T-cell (primary cell): ENCODE measurements at regions of chr11 and their contacts with region 1.

Region 1: DNA sequence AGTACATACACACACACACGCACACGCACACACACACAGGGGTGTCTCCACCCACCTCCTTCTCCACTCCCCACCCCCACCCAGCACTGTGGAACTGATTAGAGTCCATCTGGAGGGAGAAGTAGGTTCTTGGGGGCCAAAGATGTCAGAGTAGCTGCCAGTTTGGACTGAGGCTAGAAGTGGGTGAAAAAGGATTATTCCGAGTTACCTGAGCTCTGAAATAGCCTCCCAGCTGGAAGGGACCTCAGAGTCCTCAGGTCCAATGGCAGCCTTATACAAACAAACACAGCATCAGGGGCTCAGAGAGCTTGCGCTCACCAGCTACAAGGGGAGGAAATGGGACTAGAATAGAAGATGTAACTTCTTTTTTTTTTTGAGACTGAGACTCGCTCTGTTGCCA is 20.8 kb downstream of the IL10RA start:
- DNase-seq: peak in 1 of 35 experiments; percentile 35
- ATAC-seq: peak in 1 of 4 experiments; percentile 43
- H3K4me3 ChIP-seq: no peak overlapping the region
- H3K4me3 Mint-ChIP-seq: peak overlapping the region; percentile 65 to 85 (median 69)
- H3K27ac ChIP-seq: peak overlapping the region; percentile 88
- H3K27ac Mint-ChIP-seq: peak overlapping the region; percentile 99 to 100
- H3K4me1 ChIP-seq: peaks cover 45 to 99% of the 10 kb centered on the region in 2 experiments
- H3K4me1 Mint-ChIP-seq: peaks cover 94 to 100% (median 99%) of the 10 kb centered on the region in 3 donors
- H3K27me3 ChIP-seq: no peaks in the 10 kb centered on the region
- H3K27me3 Mint-ChIP-seq: no peaks in the 10 kb centered on the region

Region 2: DNA sequence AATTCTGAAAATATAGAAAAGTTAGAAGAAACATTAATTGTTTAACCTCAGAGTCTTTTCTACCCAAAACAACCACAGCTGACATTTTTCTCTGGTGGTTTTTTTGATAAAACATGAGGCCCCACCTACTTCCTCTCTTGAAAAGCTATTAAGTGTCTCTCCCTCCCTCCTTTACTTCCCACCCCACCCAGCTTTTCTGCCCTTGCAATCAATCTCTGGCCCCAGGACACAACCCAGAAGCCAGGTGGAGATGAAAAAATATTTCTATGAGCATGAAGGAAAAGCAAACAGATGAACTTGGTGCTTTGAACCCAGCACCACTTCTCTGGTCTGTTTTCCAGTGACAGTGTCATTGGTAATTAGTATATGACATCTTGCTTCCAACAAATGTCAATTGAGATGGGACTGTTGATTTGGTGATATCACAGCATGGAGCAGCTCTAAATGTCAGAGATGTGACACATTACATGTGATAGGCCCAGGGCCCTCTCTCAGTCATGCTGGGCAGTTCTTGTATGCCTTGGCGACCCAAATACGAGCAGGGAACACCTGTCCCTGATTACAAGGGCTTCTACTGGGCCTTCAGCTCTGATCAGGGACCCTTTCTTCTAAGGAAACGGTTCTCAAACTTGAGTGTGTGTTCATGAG is 53.9 kb before region 1 on chr11:
- CTCF ChIA-PET with region 1: interaction called in 1 of 2 experiments, 3 read pairs
- POLR2A ChIA-PET with region 1: interaction called in 1 of 2 experiments, 11 read pairs
- DNase-seq: peak in 17 of 35 experiments; percentile 19 to 72 (median 36)
- ATAC-seq: peak; percentile 26 to 50 (median 40)
- H3K4me3 ChIP-seq: peak overlapping the region in 1 of 2 donors; percentile 39
- H3K4me3 Mint-ChIP-seq: peak overlapping the region; percentile 59 to 78 (median 77)
- H3K27ac ChIP-seq: peak overlapping the region; percentile 85
- H3K27ac Mint-ChIP-seq: peak overlapping the region; percentile 88 to 98
- H3K4me1 ChIP-seq: peaks cover 61 to 70% of the 10 kb centered on the region in 2 experiments
- H3K4me1 Mint-ChIP-seq: peaks cover 83 to 95% (median 90%) of the 10 kb centered on the region in 3 donors
- H3K27me3 ChIP-seq: no peaks in the 10 kb centered on the region
- H3K27me3 Mint-ChIP-seq: no peaks in the 10 kb centered on the region

Region 3: DNA sequence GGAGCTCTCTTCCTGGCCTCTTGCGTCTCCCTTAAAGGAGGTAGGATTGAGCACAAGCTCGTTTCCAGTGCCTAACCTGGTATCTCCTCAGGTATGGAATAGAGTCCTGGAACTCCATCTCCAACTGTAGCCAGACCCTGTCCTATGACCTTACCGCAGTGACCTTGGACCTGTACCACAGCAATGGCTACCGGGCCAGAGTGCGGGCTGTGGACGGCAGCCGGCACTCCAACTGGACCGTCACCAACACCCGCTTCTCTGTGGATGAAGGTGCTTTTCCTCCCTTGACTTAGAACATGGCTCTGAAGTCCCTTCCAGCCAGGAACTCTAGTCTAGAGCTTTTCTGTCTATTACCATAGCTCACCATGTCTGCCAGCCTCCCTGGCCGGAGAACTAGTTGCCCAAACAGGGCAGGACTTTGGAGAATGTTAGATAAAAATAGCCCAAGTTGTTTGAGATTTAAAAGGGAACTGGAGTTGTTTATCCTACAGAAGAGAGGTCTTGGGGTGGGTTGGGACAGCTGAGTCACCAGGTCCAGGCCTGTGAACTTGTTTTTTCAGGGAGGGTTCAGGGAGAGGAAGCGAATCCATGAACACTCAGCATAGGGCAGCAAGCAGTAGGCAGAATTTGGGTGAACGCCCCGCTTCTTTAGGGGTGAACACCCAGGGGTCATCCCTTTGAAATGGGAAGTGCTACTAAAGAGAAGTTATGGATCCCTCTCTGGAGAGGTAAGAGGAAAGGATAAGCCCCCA is 17.5 kb before region 1 on chr11:
- CTCF ChIA-PET with region 1: no interaction called
- POLR2A ChIA-PET with region 1: no interaction called
- DNase-seq: no peak
- ATAC-seq: no peak
- H3K4me3 ChIP-seq: peak overlapping the region; percentile 25 to 96
- H3K4me3 Mint-ChIP-seq: peak overlapping the region; percentile 91 to 95 (median 93)
- H3K27ac ChIP-seq: peak overlapping the region; percentile 45
- H3K27ac Mint-ChIP-seq: peak overlapping the region; percentile 91 to 94
- H3K4me1 ChIP-seq: peaks cover 27 to 75% of the 10 kb centered on the region in 2 experiments
- H3K4me1 Mint-ChIP-seq: peaks cover 82 to 92% (median 82%) of the 10 kb centered on the region in 3 donors
- H3K27me3 ChIP-seq: no peaks in the 10 kb centered on the region
- H3K27me3 Mint-ChIP-seq: no peaks in the 10 kb centered on the region

Region 4: DNA sequence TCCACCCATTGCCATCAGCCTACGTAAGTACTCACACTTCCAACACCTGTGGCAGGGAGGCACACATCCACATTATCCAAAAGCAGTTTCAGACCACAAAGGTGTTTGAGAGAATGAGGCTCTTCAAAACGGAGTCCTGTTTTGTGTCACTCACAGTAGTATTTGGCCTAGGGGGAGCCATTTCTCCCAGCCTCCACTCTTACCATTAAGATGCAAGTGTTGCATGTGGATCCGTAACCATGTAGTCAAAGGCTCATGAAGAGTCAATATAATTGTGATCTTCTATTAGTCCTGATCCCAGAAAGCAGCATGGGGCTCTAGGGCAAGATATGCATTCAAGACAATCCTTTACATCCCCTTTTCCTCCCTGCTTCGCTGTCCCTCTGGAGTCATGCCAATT is 20.7 kb after region 1 on chr11:
- CTCF ChIA-PET with region 1: no interaction called
- POLR2A ChIA-PET with region 1: interaction called in 1 of 2 experiments, 10 read pairs
- DNase-seq: no peak
- ATAC-seq: no peak
- H3K4me3 ChIP-seq: no peak overlapping the region
- H3K4me3 Mint-ChIP-seq: no peak overlapping the region
- H3K27ac ChIP-seq: no peak overlapping the region
- H3K27ac Mint-ChIP-seq: peak overlapping the region in 1 of 2 donors; percentile 31
- H3K4me1 ChIP-seq: peaks cover 0 to 3% of the 10 kb centered on the region in 2 experiments
- H3K4me1 Mint-ChIP-seq: peaks cover 13 to 38% (median 31%) of the 10 kb centered on the region in 3 donors
- H3K27me3 ChIP-seq: no peaks in the 10 kb centered on the region
- H3K27me3 Mint-ChIP-seq: no peaks in the 10 kb centered on the region